Breast epithelium (tissue), 4 donors: ENCODE measurements at regions of chr6 and their contacts with region 1.

Region 1: GRCh38 chr6:29522227-29522626 is 34.5 kb upstream of the MAS1L start:
- DNase-seq: no peak
- H3K4me3 ChIP-seq: no peak overlapping the region
- H3K27ac ChIP-seq: no peak overlapping the region
- H3K4me1 ChIP-seq: no peaks in the 10 kb centered on the region
- H3K27me3 ChIP-seq: no peaks in the 10 kb centered on the region
- CTCF ChIP-seq: no peak
- POLR2A ChIP-seq: no peak

Region 2: GRCh38 chr6:29490552-29490951 is 31.7 kb before region 1 on chr6:
- intact Hi-C with region 1: loop called (anchors 2 kb)
- DNase-seq: no peak
- H3K4me3 ChIP-seq: no peak overlapping the region
- H3K27ac ChIP-seq: no peak overlapping the region
- H3K4me1 ChIP-seq: no peaks in the 10 kb centered on the region
- H3K27me3 ChIP-seq: no peaks in the 10 kb centered on the region
- CTCF ChIP-seq: no peak
- POLR2A ChIP-seq: no peak

Region 3: DNA sequence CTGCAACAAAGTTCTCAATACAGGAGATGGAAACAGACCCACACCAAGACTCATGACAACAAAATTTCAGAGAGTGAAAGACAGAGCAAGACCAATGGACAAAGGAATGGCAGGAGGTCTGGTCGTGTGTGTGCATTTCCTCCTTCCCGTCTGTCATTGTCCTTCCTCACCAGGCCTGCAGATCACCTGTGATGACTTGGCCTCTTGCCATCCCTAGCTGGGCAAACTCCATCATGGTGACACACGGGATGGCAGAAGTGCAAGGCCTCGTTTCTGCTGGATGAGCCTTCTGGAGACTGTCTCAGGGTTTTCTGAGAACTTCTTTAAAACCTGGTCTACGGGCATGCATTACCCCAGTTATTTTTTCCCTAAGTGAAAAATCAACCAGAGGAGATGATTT is 871.9 kb after region 1 on chr6:
- intact Hi-C with region 1: no loop called
- DNase-seq: no peak
- H3K4me3 ChIP-seq: no peak overlapping the region
- H3K27ac ChIP-seq: no peak overlapping the region
- H3K4me1 ChIP-seq: no peaks in the 10 kb centered on the region
- H3K27me3 ChIP-seq: peaks cover 0 to 29% of the 10 kb centered on the region in 2 donors
- CTCF ChIP-seq: no peak
- POLR2A ChIP-seq: no peak